Naive thymus-derived CD4-positive, alpha-beta T cell (primary cell): ENCODE measurements at regions of chrX and their contacts with region 1.

Region 1: GRCh38 chrX:12974796-12975669 is at the start of gene TMSB4X:
- DNase-seq: peak; percentile 69 to 87 (median 81)
- ATAC-seq: peak; percentile 75
- H3K4me3 ChIP-seq: peak within 1 kb of the TSS; percentile 97
- H3K4me3 Mint-ChIP-seq: peak within 1 kb of the TSS; percentile 92 to 99 (median 96)
- H3K27ac ChIP-seq: peak within 1 kb of the TSS; percentile 93
- H3K27ac Mint-ChIP-seq: peak within 1 kb of the TSS; percentile 92 to 99 (median 97)
- H3K4me1 ChIP-seq: peaks cover 5 to 19% of the 10 kb centered on the region in 2 donors
- H3K4me1 Mint-ChIP-seq: peaks cover 6 to 57% (median 24%) of the 10 kb centered on the region in 7 donors
- H3K27me3 ChIP-seq: no peaks in the 10 kb centered on the region
- H3K27me3 Mint-ChIP-seq: peaks cover 0 to 8% (median 0%) of the 10 kb centered on the region in 5 donors
- total RNA-seq, gene TMSB4X: 3,911 to 13,454 (median 4,935) TPM

Region 2: DNA sequence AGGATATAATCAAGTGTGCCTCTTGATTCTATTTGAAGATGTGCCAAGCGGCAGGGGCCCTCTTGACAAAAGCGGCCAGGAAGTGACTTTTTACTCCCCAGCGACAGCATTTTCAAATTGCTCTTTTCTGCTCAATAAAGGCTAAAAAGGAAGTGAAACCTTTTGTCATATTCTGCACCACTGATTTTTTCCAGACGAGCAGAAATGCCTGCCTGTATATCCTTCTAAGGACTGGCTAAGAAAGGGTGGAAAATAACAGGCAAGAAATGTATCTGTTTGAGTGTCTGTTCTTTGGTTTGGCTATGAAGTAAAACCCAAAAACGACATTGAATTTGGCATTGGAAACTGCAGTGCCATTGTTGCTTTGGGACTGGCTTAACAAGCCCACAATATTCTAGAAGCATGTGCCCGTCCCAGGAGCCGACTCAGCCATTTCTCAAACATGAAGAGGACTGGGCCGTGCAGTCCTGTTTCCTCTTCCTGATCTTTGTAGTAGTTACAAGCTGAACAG is 25.3 kb after region 1 on chrX:
- CTCF ChIA-PET with region 1: interaction called, 8 read pairs
- POLR2A ChIA-PET with region 1: interaction called, 873 read pairs
- intact Hi-C with region 1: loop called (anchors 1 kb)
- DNase-seq: peak in 7 of 9 donors; percentile 46 to 74 (median 68)
- ATAC-seq: peak; percentile 65
- H3K4me3 ChIP-seq: peak overlapping the region; percentile 42
- H3K4me3 Mint-ChIP-seq: peak overlapping the region; percentile 70 to 86 (median 84)
- H3K27ac ChIP-seq: peak overlapping the region; percentile 77
- H3K27ac Mint-ChIP-seq: peak overlapping the region; percentile 83 to 98 (median 95)
- H3K4me1 ChIP-seq: peaks cover 66 to 68% of the 10 kb centered on the region in 2 donors
- H3K4me1 Mint-ChIP-seq: peaks cover 27 to 88% (median 74%) of the 10 kb centered on the region in 7 donors
- H3K27me3 ChIP-seq: no peaks in the 10 kb centered on the region
- H3K27me3 Mint-ChIP-seq: no peaks in the 10 kb centered on the region

Region 3: DNA sequence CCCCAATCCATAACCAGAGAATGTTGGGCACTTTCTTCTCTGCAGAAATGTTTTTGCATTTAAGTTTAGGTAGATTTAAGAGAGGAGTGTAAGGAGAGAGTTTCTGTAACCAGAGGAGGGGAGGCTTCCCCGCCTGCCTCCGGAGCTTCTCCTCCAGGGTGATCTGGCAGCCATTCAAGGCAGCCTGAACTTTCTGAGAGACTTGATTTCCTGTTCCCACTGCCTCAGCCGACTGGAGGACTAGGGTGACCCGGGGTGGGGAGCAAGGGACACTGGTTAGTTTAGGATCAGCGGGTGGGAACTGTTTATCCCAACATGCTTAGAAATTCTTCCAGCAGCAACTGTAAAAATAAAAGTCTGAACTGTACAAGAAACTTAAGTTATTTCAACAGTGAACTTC is 54.3 kb after region 1 on chrX:
- CTCF ChIA-PET with region 1: interaction called, 6 read pairs
- POLR2A ChIA-PET with region 1: interaction called, 213 read pairs
- intact Hi-C with region 1: loop called in 1 of 2 experiments (anchors 1 kb)
- DNase-seq: peak in 2 of 9 donors; percentile 13 to 23
- ATAC-seq: peak; percentile 44
- H3K4me3 ChIP-seq: no peak overlapping the region
- H3K4me3 Mint-ChIP-seq: peak overlapping the region; percentile 20 to 78 (median 62)
- H3K27ac ChIP-seq: peak overlapping the region; percentile 71
- H3K27ac Mint-ChIP-seq: peak overlapping the region; percentile 81 to 98 (median 93)
- H3K4me1 ChIP-seq: peaks cover 51 to 52% of the 10 kb centered on the region in 2 donors
- H3K4me1 Mint-ChIP-seq: peaks cover 33 to 88% (median 72%) of the 10 kb centered on the region in 7 donors
- H3K27me3 ChIP-seq: no peaks in the 10 kb centered on the region
- H3K27me3 Mint-ChIP-seq: no peaks in the 10 kb centered on the region

Region 4: DNA sequence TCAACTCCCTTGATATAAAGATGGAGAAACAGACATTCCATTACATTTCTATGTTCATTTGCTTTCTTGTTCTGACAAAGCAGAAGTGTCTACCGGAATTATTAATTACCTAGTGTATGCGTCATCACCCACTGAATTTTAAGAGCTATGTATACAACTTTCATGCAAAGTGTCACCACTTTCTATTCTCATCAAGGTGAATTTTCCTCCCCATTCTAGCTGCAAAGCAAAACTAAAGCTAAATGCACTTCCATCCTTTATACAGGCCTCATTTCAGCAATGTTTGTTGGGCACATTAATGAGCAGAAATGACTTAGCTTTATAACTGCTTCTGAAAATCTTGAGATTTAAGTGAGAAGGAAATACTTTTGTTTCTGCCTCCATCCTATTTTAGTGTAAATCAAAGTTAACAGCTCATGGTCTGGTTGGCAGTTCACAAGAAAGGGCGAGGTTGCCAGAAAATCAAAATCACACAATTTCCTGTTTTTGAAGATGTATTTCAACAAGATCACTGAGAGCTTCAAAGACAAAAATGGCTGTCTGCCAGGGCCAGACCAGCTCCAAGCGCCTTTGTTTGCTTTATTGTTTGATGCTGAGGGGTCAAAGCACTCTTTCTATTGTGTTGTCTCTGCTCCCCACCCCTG is 76.6 kb after region 1 on chrX:
- CTCF ChIA-PET with region 1: interaction called, 9 read pairs
- POLR2A ChIA-PET with region 1: interaction called, 197 read pairs
- intact Hi-C with region 1: loop called (anchors 1 to 2 kb)
- DNase-seq: peak in 7 of 9 donors; percentile 69 to 87 (median 79)
- ATAC-seq: peak; percentile 84
- H3K4me3 ChIP-seq: peak overlapping the region; percentile 25
- H3K4me3 Mint-ChIP-seq: peak overlapping the region; percentile 46 to 80 (median 58)
- H3K27ac ChIP-seq: peak overlapping the region; percentile 74
- H3K27ac Mint-ChIP-seq: peak overlapping the region; percentile 93 to 96 (median 95)
- H3K4me1 ChIP-seq: peaks cover 39 to 85% of the 10 kb centered on the region in 2 donors
- H3K4me1 Mint-ChIP-seq: peaks cover 14 to 93% (median 81%) of the 10 kb centered on the region in 7 donors
- H3K27me3 ChIP-seq: no peaks in the 10 kb centered on the region
- H3K27me3 Mint-ChIP-seq: no peaks in the 10 kb centered on the region

Region 5: DNA sequence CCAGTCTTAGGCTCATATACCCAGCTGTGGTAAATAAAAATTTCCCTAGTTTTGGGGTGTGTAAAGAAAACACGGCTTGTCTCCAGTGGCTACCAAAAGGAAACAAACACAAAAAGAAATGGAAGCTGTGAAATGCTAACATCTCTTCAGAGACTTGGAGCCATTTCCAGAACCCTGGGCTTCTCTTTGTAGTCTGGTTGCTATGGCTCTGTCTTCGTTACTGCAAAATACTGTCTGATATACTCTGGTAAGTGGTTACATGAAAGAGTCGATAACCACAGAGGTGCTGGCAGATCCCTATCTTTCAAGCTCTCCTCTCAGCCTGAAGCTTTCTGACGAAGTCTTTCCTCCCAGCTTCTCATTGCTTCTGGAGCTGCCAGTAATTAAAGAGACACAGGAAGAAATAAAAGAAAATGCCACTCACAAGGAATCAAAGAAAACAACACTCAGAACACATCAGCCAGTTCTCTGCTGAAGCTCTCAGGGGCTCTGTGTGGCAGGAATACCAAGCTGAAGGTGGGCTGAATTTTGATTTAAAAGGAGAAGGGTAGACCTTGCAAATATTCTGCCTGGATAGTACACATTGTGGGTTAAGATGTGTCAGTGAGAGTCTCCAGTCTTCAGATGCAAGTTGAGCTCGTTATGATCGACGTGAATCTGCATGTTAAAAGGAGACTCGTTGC is 176.9 kb after region 1 on chrX:
- CTCF ChIA-PET with region 1: no interaction called
- POLR2A ChIA-PET with region 1: no interaction called
- intact Hi-C with region 1: loop called (anchors 5 kb)
- DNase-seq: peak in 7 of 9 donors; percentile 51 to 82 (median 80)
- ATAC-seq: peak; percentile 96
- H3K4me3 ChIP-seq: no peak overlapping the region
- H3K4me3 Mint-ChIP-seq: peak overlapping the region; percentile 46 to 77 (median 68)
- H3K27ac ChIP-seq: peak overlapping the region; percentile 55
- H3K27ac Mint-ChIP-seq: peak overlapping the region; percentile 78 to 94 (median 85)
- H3K4me1 ChIP-seq: peaks cover 7 to 8% of the 10 kb centered on the region in 2 donors
- H3K4me1 Mint-ChIP-seq: peaks cover 0 to 31% (median 18%) of the 10 kb centered on the region in 7 donors
- H3K27me3 ChIP-seq: no peaks in the 10 kb centered on the region
- H3K27me3 Mint-ChIP-seq: no peaks in the 10 kb centered on the region